ENCODE measurements at regions of chr11 and their contacts with region 1.

Region 1: DNA sequence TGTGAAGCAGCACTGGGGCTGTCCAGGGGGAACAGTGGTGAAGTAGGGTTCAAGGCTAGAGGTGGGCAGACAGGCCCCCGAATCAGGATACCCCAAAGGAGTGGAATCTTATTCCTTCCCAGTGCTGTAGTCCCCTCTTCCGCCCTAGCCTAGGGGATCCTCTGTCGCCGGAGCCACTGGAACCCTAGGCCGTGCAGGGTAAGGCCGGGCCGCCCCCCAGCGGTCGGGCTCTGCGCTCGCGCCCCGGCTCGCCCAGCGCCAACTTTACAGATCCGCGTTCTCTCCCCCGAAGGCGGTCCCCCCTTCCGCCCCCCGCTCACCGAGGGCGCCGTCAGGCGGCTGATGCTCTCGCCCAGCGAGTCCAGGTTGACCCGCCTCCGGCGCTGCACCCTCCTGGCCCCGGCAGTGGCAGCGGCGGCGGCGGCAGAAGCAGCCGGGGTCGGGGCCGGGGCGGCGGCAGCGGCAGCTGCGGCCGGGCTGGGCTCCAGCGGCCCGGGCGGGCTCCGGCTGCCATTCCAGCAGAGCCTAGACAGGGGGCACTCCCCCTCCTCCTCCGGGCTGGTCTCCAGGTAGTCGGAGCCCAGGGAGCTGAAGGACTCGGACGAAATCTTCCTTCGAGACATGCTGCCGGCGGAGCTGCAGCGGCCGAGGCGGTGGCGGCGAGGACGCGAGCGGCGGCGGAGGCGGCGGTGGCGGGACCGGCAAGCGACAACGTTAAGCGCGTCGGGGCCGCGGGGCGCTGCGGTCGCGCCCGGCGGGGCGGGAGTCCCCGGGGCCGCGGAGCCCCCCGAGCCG is 646 bp downstream of the GUCY1A2 start:
- DNase-seq: peak in 9 of 10 donors; percentile 49 to 81 (median 57)
- H3K4me3 ChIP-seq: peak overlapping the region; percentile 39 to 81 (median 63)
- H3K27ac ChIP-seq: peak overlapping the region in 47 of 59 donors; percentile 10 to 89 (median 64)
- H3K27me3 ChIP-seq: peaks cover 0 to 4% (median 0%) of the 10 kb centered on the region in 45 donors
- CTCF ChIP-seq: peak; percentile 15 to 79 (median 58)

Region 2: GRCh38 chr11:106724293-106724892 is 293.2 kb before region 1 on chr11:
- intact Hi-C with region 1: loop called (anchors 5 kb)
- DNase-seq: no peak
- H3K4me3 ChIP-seq: no peak overlapping the region
- H3K27ac ChIP-seq: peak overlapping the region in 4 of 59 donors; percentile 21 to 31 (median 30)
- H3K27me3 ChIP-seq: no peaks in the 10 kb centered on the region
- CTCF ChIP-seq: no peak